ENCODE measurements at regions of chr3 and their contacts with region 1.

Region 1: DNA sequence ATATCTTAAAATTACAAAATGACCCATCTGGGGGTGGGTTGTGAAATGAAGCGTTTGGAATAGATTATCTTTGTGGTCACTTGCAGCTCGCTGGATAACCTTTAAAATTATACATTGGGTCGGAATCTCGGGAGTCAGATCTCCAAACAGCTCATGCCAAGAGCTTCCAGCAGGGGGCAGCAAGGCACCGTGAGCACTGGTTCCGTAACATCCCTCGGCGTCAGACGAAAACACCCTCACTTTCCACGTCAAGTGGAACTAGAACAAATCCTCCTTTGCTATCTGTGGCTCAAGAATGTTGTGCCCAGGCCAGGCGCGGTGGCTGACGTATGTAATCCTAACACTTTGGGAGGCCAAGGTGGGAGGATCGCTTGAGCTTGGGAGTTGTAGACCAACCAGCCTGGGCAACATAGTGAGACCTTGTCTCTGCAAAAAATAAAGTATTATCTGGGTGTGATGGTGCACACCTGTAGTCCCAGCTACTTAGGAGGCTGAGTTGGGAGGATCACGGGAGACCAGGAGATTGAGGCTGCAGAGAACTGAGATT is 31.1 kb downstream of the UMPS start:
- DNase-seq: peak; percentile 75

Region 2: GRCh38 chr3:124837730-124838186 is 76.4 kb after region 1 on chr3:
- CTCF ChIA-PET with region 1: no interaction called
- POLR2A ChIA-PET with region 1: no interaction called
- DNase-seq: no peak

Region 3: DNA sequence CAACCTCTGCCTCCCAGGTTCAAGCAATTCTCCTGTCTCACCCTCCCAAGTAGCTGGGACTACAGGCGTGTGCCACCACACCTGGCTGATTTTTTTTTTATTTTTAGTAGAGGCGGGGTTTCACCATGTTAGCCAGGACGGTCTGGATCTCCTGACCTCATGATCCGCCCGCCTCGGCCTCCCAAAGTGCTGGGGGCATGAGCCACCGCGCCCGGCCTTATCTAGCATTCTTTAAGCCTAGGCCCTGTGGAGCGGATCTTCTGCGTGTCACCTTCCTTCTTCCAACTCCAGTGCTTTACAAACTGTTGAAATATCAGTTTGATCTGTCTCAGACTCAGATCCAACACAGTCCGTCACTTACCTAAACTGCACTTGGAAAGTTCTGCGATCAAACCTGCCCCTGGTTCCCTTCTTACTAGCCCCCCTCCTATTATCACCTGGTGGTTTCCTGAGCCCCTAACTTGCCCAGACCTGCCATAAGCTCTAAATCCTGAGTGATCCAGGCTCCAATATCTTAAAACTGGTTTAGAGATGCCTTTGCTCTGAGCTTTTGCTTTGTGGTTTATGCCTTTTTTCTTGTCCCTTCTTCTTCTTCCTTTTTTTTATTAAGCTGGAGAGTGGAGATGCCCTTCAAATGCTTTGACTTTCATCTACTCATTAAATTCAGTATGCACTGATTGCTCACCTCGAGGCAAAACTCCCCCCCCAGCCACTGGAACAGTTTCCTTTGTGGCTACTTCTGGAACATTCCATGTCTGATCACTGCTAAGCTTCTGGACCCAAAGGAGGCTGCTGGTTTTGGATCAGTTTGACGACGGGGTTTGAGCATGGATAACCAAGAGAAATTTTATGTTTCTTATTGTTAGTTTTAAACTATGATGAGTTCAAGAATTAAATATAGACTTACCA is 129.2 kb after region 1 on chr3:
- CTCF ChIA-PET with region 1: interaction called, 11 read pairs
- POLR2A ChIA-PET with region 1: no interaction called
- DNase-seq: no peak

Measured in HEK293T (cell line).